Left cardiac atrium (tissue), 4 donors: ENCODE measurements at regions of chr4 and their contacts with region 1.

Region 1: GRCh38 chr4:77385124-77385969 is 220.3 kb upstream of the CXCL13 start:
- DNase-seq: peak; percentile 52
- ATAC-seq: peak; percentile 80 to 84

Region 2: GRCh38 chr4:77433418-77433733 is 48.0 kb after region 1 on chr4:
- intact Hi-C with region 1: loop called (anchors 1 to 10 kb)
- DNase-seq: no peak
- ATAC-seq: peak; percentile 85 to 86

Region 3: DNA sequence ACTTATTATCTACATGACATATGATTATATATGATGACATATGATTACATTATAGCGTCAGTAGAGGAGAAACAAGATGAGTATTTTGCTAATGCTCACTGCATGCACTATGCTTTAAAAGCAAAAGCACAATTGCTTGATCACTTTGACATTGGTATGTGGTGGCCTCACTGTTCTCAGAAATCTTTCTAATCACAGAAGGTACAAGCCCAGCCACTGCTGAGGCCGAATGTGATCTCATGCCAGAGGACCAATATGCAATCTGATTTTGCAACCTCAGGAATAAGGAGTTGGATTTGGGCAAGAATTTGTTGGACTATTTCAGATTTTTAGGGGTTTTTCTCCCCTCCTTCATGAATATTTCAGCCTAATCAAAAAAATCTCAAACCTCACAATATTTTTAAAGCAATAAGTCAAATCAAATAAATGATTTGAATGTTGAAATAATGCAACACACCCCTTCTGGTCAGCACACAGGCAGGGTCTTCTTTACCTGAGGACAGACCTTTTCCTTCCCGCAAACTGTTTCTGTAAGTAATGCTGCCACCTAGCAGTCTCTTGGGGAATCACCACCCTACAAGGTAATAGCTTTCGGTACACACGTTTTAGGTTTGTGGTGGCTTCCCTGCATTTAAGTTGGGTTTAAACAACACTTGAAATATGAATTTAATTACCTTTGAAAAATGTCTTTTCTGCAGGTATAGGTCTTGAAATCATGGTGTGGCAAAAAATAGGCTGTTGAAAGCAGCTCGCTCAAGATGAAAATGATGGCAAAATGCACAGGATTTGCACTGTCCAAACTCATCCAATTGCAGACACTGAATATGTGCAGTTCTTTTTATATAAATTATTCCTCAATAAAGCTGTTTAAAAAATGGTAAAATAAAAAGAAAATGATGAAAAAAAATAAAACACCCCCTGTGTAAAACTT is 215.4 kb after region 1 on chr4:
- intact Hi-C with region 1: loop called in 1 of 2 experiments (anchors 2 kb)
- DNase-seq: no peak
- ATAC-seq: peak in 1 of 2 donors; percentile 47

Region 4: GRCh38 chr4:77618383-77619122 is 233.2 kb after region 1 on chr4:
- intact Hi-C with region 1: loop called in 1 of 2 experiments (anchors 2 kb)
- DNase-seq: peak; percentile 58
- ATAC-seq: peak; percentile 87 to 96